Activated T-helper 1 cell treated with anti-CD3 and anti-CD28 coated beads, Interleukin-12 subunit alpha, Interleukin-12 subunit beta, Interleukin-2, Interleukin-4 antibody, amounts not matched to agents 30 ng/mL and 10 ng/mL and 1 ng/mL, durations not matched to agents 14 hours and 24 hours and 36 hours (primary cell): ENCODE measurements at regions of chr1 and their contacts with region 1.

Region 1: DNA sequence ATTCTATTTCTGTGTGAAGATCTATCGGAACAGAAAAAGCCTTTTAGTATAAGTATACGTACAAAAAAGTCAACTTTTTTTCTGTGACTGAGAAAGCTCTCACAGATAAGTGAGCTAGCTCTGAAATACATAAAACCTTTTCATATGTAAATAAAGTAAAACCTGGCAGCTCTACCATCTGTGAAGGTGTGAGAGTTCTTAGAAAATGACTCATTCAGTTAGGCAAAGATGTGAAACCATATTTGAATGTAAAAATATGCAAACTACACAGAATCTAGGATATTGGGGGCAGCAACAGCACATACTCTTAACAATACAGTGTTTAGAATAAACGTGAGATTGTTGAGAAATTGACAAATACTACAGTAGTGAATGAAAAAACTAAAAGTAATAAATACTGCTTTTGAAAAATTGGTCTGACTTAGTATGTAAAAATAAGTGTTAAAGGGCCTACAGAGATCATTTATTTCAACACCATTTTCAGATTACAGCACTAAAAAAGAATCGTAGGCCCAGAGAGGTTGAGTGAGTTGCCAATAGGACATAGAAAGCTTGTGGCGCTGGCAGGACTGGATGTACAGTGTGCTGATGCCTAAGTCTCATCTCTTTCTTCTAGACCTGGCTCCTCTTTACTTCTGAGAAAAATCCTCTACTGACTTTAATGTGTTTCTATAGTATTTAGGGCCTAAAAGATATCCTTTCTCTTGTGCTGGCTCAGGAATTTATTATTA is 19.8 kb downstream of the ATP6V1G3 start:
- DNase-seq: no peak
- H3K4me3 Mint-ChIP-seq: peak overlapping the region; percentile 71
- H3K27ac Mint-ChIP-seq: peak overlapping the region; percentile 84
- H3K4me1 Mint-ChIP-seq: peaks cover 62% of the 10 kb centered on the region
- H3K27me3 Mint-ChIP-seq: no peaks in the 10 kb centered on the region

Region 2: GRCh38 chr1:198443374-198444233 is 77.1 kb before region 1 on chr1:
- intact Hi-C with region 1: no loop called
- DNase-seq: no peak
- H3K4me3 Mint-ChIP-seq: no peak overlapping the region
- H3K27ac Mint-ChIP-seq: no peak overlapping the region
- H3K4me1 Mint-ChIP-seq: no peaks in the 10 kb centered on the region
- H3K27me3 Mint-ChIP-seq: peaks cover 3% of the 10 kb centered on the region

Region 3: GRCh38 chr1:198465201-198466144 is 55.2 kb before region 1 on chr1:
- intact Hi-C with region 1: loop called (anchors 2 kb)
- DNase-seq: no peak
- H3K4me3 Mint-ChIP-seq: no peak overlapping the region
- H3K27ac Mint-ChIP-seq: no peak overlapping the region
- H3K4me1 Mint-ChIP-seq: peaks cover 13% of the 10 kb centered on the region
- H3K27me3 Mint-ChIP-seq: no peaks in the 10 kb centered on the region

Region 4: GRCh38 chr1:198620951-198621824 is 100.5 kb after region 1 on chr1:
- intact Hi-C with region 1: loop called (anchors 5 kb)
- DNase-seq: peak; percentile 66
- H3K4me3 Mint-ChIP-seq: peak overlapping the region; percentile 84
- H3K27ac Mint-ChIP-seq: peak overlapping the region; percentile 99
- H3K4me1 Mint-ChIP-seq: peaks cover 82% of the 10 kb centered on the region
- H3K27me3 Mint-ChIP-seq: no peaks in the 10 kb centered on the region

Region 5: DNA sequence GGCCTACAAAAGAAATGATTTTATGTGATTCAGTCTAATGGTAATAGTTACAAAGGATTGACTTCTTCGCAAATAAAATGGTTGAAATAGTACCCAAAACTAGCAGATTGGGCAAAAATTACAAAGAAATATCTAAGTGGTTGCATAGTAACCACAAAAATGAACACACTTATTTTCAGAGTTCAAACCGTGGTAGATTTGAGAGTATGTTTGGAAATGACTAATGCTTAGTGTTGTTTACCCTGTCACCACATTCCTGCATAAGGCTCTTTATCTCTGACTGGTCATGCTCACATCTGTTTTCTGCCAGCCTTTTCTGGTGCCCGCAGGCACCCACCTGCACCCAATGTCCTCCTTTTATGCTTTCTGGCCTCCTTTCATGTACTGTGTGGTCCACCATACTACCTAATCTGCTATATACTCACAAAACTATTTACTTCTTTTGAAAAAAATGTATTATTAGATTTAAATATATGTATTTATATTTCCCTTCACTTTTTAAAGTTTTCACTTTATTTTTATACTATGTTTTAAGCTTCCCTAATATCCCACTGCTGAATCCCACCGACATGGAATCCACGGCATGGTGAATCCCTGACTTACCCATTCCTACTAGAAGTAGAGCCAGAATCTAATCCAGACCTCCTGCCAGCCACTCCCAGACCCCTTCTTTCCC is 148.5 kb after region 1 on chr1:
- intact Hi-C with region 1: loop called (anchors 1 kb)
- DNase-seq: no peak
- H3K4me3 Mint-ChIP-seq: peak overlapping the region; percentile 63
- H3K27ac Mint-ChIP-seq: peak overlapping the region; percentile 93
- H3K4me1 Mint-ChIP-seq: peaks cover 92% of the 10 kb centered on the region
- H3K27me3 Mint-ChIP-seq: no peaks in the 10 kb centered on the region

Region 6: GRCh38 chr1:198937231-198938031 is 416.7 kb after region 1 on chr1:
- intact Hi-C with region 1: loop called (anchors 1 kb)
- DNase-seq: peak; percentile 71
- H3K4me3 Mint-ChIP-seq: no peak overlapping the region
- H3K27ac Mint-ChIP-seq: peak overlapping the region; percentile 93
- H3K4me1 Mint-ChIP-seq: peaks cover 33% of the 10 kb centered on the region
- H3K27me3 Mint-ChIP-seq: no peaks in the 10 kb centered on the region